ENCODE measurements at regions of chr5 and their contacts with region 1.

Region 1: GRCh38 chr5:134427540-134428041 is 15.9 kb upstream of the CDKN2AIPNL start:
- DNase-seq: no peak
- H3K4me3 ChIP-seq: no peak overlapping the region
- H3K27ac ChIP-seq: no peak overlapping the region
- H3K4me1 ChIP-seq: peaks cover 6% of the 10 kb centered on the region
- H3K27me3 ChIP-seq: no peaks in the 10 kb centered on the region
- CTCF ChIP-seq: no peak

Region 2: DNA sequence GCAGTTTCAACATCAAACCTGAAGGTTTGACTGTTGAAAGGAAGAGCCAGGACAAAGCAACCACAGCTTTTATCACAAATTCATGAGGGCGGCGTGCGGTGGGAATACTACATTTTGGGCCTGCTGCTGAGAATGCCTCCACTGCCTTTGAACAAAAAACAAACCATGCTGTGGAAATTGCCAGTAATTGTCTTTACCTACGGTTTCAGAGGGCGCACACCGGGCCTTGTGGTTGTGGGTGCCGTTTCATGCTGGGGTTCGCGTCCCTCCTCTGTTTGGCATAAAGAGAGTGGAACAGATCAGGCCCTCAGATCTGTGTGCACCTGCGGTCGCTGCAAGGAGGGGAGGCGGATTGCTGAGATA is 340.7 kb before region 1 on chr5:
- dilution Hi-C with region 1: no loop called
- DNase-seq: no peak
- H3K4me3 ChIP-seq: no peak overlapping the region
- H3K27ac ChIP-seq: no peak overlapping the region
- H3K4me1 ChIP-seq: peaks cover 3% of the 10 kb centered on the region
- H3K27me3 ChIP-seq: no peaks in the 10 kb centered on the region
- CTCF ChIP-seq: no peak

Region 3: GRCh38 chr5:134370871-134371833 is 56.4 kb before region 1 on chr5 and contains the start of gene UBE2B:
- dilution Hi-C with region 1: no loop called
- DNase-seq: peak; percentile 95
- H3K4me3 ChIP-seq: peak within 1 kb of the TSS; percentile 93 to 99 (median 93)
- H3K27ac ChIP-seq: peak within 1 kb of the TSS; percentile 96
- H3K4me1 ChIP-seq: peaks cover 15% of the 10 kb centered on the region
- H3K27me3 ChIP-seq: no peaks in the 10 kb centered on the region
- CTCF ChIP-seq: no peak
- polyA plus RNA-seq, gene UBE2B: 31.7 to 73.5 TPM (median 39.3 TPM) in 3 replicates

Region 4: GRCh38 chr5:134511788-134512650 is 84.4 kb after region 1 on chr5:
- dilution Hi-C with region 1: loop called (anchors 5 kb)
- DNase-seq: no peak
- H3K4me3 ChIP-seq: no peak overlapping the region
- H3K27ac ChIP-seq: peak overlapping the region; percentile 76
- H3K4me1 ChIP-seq: peaks cover 48% of the 10 kb centered on the region
- H3K27me3 ChIP-seq: no peaks in the 10 kb centered on the region
- CTCF ChIP-seq: peak in 2 of 3 experiments; percentile 34 to 53

Measured in keratinocyte (primary cell).